Left ventricle myocardium inferior (tissue), 1 donor: ENCODE measurements at regions of chr4 and their contacts with region 1.

Region 1: GRCh38 chr4:128191115-128191781 is 96.4 kb downstream of the PGRMC2 start:
- DNase-seq: peak; percentile 31
- H3K4me3 ChIP-seq: no peak overlapping the region
- H3K27ac ChIP-seq: no peak overlapping the region
- H3K4me1 ChIP-seq: peaks cover 8% of the 10 kb centered on the region
- H3K27me3 ChIP-seq: no peaks in the 10 kb centered on the region
- CTCF ChIP-seq: peak; percentile 89

Region 2: GRCh38 chr4:127844601-127845116 is 346.6 kb before region 1 on chr4:
- intact Hi-C with region 1: no loop called
- DNase-seq: no peak
- H3K4me3 ChIP-seq: no peak overlapping the region
- H3K27ac ChIP-seq: no peak overlapping the region
- H3K4me1 ChIP-seq: no peaks in the 10 kb centered on the region
- H3K27me3 ChIP-seq: no peaks in the 10 kb centered on the region
- CTCF ChIP-seq: no peak

Region 3: GRCh38 chr4:128275346-128275745 is 84.1 kb after region 1 on chr4:
- intact Hi-C with region 1: no loop called
- DNase-seq: no peak
- H3K4me3 ChIP-seq: no peak overlapping the region
- H3K27ac ChIP-seq: no peak overlapping the region
- H3K4me1 ChIP-seq: peaks cover 30% of the 10 kb centered on the region
- H3K27me3 ChIP-seq: no peaks in the 10 kb centered on the region
- CTCF ChIP-seq: no peak

Region 4: DNA sequence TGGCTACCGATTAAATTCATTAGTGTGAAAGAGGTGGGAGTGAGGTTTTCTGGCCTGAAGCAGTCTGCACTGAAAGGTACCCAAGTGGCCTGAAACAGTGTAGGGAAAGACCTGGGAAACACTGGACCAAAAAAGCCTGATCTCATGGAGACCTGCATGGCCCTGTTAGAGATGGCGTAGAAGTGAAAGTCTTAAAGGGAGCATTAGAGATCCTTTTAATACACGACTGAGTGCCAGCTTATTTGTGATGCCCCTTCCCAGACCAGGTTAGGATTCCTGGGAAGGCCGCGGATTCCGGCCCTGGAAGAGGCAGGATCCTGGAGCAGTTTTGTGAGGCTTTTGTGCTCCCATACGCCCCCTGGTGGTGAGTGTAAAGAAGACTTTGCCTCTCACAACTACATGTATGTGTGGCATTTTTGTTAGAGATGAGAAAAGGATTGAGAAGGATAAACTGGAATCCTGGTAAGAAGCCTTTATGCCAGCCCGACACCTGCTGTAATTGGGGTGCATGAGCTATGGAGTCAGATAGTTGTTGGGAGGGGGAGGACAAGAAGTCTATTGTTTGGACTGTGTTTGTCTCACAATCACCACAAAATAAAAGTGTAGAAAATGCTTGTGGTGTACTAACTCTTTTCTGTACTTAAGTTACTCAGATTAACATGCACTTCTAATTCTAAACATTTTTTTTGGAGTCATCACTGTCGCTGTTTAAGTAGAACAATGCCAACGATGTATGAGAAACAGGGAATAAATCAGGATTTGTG is 672.2 kb after region 1 on chr4:
- intact Hi-C with region 1: loop called (anchors 5 kb)
- DNase-seq: peak; percentile 58
- H3K4me3 ChIP-seq: no peak overlapping the region
- H3K27ac ChIP-seq: peak overlapping the region; percentile 9
- H3K4me1 ChIP-seq: peaks cover 47% of the 10 kb centered on the region
- H3K27me3 ChIP-seq: no peaks in the 10 kb centered on the region
- CTCF ChIP-seq: peak; percentile 87